WTC11 (cell line): ENCODE measurements at regions of chr4 and their contacts with region 1.

Region 1: DNA sequence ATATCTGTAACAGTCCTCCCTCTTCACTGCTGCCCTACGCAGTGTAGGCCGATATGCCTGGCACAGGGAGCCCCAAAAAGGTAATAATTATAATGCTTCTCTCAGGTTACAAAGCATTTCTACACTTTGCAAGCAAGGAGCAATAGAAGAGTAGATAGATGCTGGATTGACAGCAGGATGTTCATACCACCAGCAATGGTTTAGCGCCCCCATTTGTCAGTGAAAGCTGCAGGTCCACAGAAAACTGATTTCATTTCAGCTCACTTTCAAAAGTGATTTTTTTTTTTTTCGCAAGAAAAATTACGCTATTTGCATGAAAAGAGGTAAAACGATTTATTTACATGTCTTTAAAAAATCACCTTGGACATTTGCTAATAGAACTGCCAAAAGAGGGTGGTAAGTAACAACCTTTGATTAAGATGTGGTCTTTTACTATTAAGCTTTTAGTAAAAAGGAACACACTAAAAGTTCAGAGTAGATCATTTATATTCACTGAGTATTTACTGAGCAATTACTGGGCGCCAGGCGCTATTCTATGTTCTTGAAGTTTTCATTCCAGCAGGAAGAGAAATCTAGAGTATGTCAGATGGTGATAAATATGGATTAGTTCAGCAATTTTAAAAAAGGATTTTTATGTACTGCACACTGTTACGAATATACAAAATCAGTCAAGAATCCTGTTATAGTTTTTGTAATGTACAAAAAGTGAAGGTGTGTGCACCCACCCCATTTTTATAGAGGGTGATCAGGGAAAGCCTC is 34.4 kb downstream of the HPF1 start:
- DNase-seq: no peak
- ATAC-seq: peak; percentile 41; the same call in 1 of the 2 replicates
- H3K4me3 Mint-ChIP-seq: no peak overlapping the region
- H3K27ac Mint-ChIP-seq: no peak overlapping the region
- H3K4me1 Mint-ChIP-seq: no peaks in the 10 kb centered on the region
- H3K27me3 Mint-ChIP-seq: no peaks in the 10 kb centered on the region
- CTCF ChIP-seq: no peak

Region 2: GRCh38 chr4:169540774-169541173 is 182.6 kb before region 1 on chr4:
- CTCF ChIA-PET with region 1: no interaction called
- POLR2A ChIA-PET with region 1: no interaction called
- DNase-seq: no peak
- ATAC-seq: no peak
- H3K4me3 Mint-ChIP-seq: no peak overlapping the region
- H3K27ac Mint-ChIP-seq: no peak overlapping the region
- H3K4me1 Mint-ChIP-seq: no peaks in the 10 kb centered on the region
- H3K27me3 Mint-ChIP-seq: peaks cover 17% of the 10 kb centered on the region
- CTCF ChIP-seq: no peak

Region 3: DNA sequence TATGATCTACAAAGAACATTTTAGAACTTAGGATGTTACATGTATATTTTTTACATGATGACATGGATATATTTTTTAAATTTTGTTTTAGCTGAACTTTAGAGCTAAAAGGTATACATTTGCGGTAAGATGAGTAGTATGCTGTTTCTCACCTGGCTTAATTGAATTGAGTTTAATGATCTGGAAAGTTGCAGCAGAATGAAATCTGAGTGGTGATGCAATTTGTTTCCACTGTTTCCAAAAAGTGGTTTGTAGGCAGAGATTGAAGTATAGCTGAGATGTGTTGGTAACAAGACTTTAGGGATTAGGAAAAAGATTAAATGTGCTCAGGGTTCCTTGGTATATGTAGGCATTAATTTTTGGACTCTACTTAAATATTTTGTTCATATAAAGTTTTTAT is 33.7 kb before region 1 on chr4:
- CTCF ChIA-PET with region 1: interaction called, 4 read pairs
- POLR2A ChIA-PET with region 1: interaction called, 12 read pairs
- DNase-seq: no peak
- ATAC-seq: no peak
- H3K4me3 Mint-ChIP-seq: no peak overlapping the region
- H3K27ac Mint-ChIP-seq: no peak overlapping the region
- H3K4me1 Mint-ChIP-seq: no peaks in the 10 kb centered on the region
- H3K27me3 Mint-ChIP-seq: no peaks in the 10 kb centered on the region
- CTCF ChIP-seq: no peak